ENCODE measurements at regions of chr11 and their contacts with region 1.

Region 1: GRCh38 chr11:118503216-118503615 is 24.1 kb upstream of the TTC36 start:
- DNase-seq: no peak
- H3K4me3 ChIP-seq: no peak overlapping the region
- H3K27ac ChIP-seq: no peak overlapping the region
- H3K4me1 ChIP-seq: no peaks in the 10 kb centered on the region
- H3K27me3 ChIP-seq: no peaks in the 10 kb centered on the region
- CTCF ChIP-seq: no peak
- POLR2A ChIP-seq: no peak

Region 2: DNA sequence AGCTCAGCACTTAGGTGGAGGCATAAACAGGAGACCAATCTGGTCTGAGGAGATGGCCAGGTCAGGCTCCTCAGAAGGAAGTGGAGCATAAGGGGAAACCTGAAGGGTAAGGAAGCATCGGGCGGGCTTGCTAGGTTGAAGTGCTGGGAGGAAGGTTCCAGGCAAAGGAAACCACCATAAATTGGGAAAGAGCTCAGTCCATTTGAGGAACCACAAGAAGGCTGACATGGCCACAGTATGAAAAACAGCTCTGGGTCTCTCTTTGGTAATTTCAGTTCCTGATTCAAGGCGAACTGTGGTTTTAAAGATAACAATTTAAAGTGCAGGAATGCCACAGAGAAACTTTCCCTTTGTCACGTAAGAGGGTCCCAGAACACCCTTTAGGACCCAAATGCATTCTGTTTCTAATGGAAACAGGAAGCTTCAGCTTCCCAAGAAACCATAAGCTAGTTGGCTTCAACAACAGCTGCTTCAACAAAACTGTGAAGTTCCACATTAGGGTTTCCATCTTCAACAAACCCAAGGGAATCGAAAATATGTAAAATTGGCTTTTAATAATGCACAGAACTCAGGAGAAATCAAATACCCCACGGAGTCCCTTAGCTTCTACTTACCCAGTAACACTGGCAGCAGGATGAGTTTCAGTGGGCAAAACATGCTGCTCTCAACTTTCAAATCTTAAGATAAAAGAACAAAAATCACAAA is 288.9 kb before region 1 on chr11:
- intact Hi-C with region 1: no loop called
- DNase-seq: peak in 5 of 7 donors; percentile 20 to 37 (median 29)
- H3K4me3 ChIP-seq: no peak overlapping the region
- H3K27ac ChIP-seq: peak overlapping the region in 2 of 5 donors; percentile 16 to 45
- H3K4me1 ChIP-seq: no peaks in the 10 kb centered on the region
- H3K27me3 ChIP-seq: peaks cover 13% of the 10 kb centered on the region
- CTCF ChIP-seq: no peak
- POLR2A ChIP-seq: no peak

Region 3: DNA sequence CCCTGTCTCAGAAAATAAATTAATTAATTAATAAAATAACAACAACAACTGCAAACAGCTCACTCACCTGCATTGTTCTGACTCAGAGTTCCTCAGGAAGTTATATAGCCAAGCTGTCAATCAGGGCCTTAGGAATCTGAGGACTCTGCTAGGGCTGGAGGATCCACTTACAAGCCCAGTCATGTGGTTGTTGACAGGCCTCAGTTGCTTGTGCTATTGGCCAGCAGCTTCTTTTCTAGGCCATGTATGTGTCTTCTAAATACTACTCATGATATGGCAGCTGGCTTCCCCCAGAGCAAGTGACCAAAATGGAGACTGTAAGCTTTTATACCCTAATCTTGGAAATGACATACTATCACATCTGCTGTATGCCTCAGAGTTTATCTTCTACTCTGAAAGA is 122.6 kb before region 1 on chr11:
- intact Hi-C with region 1: loop called in 1 of 2 experiments (anchors 10 kb)
- DNase-seq: no peak
- H3K4me3 ChIP-seq: no peak overlapping the region
- H3K27ac ChIP-seq: no peak overlapping the region
- H3K4me1 ChIP-seq: no peaks in the 10 kb centered on the region
- H3K27me3 ChIP-seq: no peaks in the 10 kb centered on the region
- CTCF ChIP-seq: no peak
- POLR2A ChIP-seq: no peak

Region 4: DNA sequence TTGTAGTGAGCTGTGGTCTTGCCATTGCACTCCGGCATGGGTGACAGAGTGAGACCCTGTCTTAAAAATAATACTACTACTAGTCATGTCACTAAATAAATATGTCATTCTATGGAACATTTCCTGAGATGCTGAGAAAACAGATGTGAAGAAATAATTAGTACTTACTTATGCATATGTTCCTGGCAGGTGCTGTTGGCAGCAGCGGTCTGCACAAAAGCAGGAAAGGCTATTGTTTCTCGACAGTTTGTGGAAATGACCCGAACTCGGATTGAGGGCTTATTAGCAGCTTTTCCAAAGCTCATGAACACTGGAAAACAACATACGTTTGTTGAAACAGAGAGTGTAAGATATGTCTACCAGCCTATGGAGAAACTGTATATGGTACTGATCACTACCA is 77.8 kb after region 1 on chr11:
- intact Hi-C with region 1: no loop called
- DNase-seq: no peak
- H3K4me3 ChIP-seq: no peak overlapping the region
- H3K27ac ChIP-seq: no peak overlapping the region
- H3K4me1 ChIP-seq: peaks cover 5 to 31% of the 10 kb centered on the region in 2 donors
- H3K27me3 ChIP-seq: no peaks in the 10 kb centered on the region
- CTCF ChIP-seq: no peak
- POLR2A ChIP-seq: no peak

Region 5: GRCh38 chr11:118634431-118635236 is 131.4 kb after region 1 on chr11:
- intact Hi-C with region 1: no loop called
- DNase-seq: peak; percentile 86 to 92 (median 89)
- H3K4me3 ChIP-seq: peak overlapping the region in 1 of 4 donors; percentile 41
- H3K27ac ChIP-seq: peak overlapping the region; percentile 66 to 93 (median 82)
- H3K4me1 ChIP-seq: peaks cover 0 to 40% of the 10 kb centered on the region in 2 donors
- H3K27me3 ChIP-seq: no peaks in the 10 kb centered on the region
- CTCF ChIP-seq: peak in 3 of 6 experiments; percentile 5 to 35 (median 35)
- POLR2A ChIP-seq: peak in 1 of 2 donors; percentile 68

Measured in adrenal gland (tissue), 19 donors.